ENCODE measurements at regions of chr1 and their contacts with region 1.

Region 1: DNA sequence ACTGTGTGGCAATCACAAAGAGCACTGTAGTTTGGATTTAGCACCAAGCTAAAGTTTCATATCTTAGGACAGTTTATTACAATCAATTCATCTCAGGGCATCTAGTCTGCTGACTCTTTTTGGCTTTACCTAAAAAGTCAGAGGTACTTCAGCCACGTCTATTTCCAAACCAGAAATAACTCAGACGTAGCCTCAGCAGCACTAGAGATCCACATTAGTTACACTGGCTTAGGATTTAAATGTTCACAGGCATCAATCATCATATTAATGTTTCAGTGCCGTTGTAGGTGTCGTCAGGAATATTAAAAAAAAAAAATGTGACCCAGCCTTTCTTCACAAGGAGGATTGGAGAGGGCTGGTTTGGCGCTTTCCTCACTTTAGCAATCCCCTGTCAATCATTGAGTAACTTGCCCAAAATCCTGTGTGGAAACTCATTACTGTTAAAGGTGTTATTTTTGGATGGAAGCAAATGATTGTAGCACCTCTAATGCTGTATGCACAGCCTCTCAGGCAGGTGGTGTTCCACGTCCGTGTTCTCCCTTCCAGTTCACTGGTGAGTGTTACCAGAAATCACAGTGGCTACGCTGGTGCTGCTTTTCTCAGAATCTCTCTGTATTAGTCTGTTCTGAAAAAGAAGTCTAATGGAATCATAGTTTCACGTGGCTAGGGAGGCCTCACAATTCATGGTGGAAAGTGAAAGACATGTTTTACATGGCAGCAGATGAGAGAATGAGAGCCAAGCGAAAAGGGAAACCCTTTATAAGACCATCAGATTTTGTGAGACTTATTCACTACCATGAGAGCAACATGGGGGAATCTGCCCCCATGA is 45.4 kb downstream of the NEK7 start:
- DNase-seq: peak; percentile 37
- ATAC-seq: peak; percentile 83
- H3K4me3 ChIP-seq: peak overlapping the region; percentile 4; the same call in 1 of the 2 replicates
- H3K27ac ChIP-seq: peak overlapping the region; percentile 56
- H3K4me1 ChIP-seq: peaks cover 12% of the 10 kb centered on the region
- H3K27me3 ChIP-seq: no peaks in the 10 kb centered on the region
- CTCF ChIP-seq: no peak
- EP300 ChIP-seq: no peak
- POLR2A ChIP-seq: no peak
- RAD21 ChIP-seq: peak; percentile 39; the same call in 1 of the 2 replicates

Region 2: DNA sequence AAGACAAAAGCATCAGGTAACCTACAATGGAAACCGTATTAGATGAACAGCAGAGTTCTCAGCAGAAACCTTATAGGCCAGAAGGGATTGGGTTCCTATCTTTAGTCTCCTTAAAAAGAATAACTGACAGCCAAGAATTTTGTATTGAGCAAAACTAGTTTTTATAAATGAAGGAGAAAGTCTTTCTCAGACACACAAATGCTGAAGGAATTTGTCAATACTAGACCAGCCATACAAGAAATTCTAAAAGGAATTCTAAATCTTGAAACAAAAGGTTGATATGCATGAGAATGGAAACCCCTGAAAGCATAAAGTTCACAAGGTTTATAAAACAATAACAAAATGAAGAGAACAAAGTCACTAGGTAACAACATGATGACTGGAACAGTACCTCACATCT is 12.8 kb after region 1 on chr1:
- CTCF ChIA-PET with region 1: no interaction called
- POLR2A ChIA-PET with region 1: no interaction called
- RAD21 ChIA-PET with region 1: no interaction called
- SMC1A ChIA-PET with region 1: interaction called, 4 read pairs
- in situ Hi-C with region 1: no loop called
- intact Hi-C with region 1: loop called (anchors 1 kb)
- DNase-seq: no peak
- ATAC-seq: no peak
- H3K4me3 ChIP-seq: no peak overlapping the region
- H3K27ac ChIP-seq: no peak overlapping the region
- H3K4me1 ChIP-seq: no peaks in the 10 kb centered on the region
- H3K27me3 ChIP-seq: no peaks in the 10 kb centered on the region
- CTCF ChIP-seq: no peak
- EP300 ChIP-seq: no peak
- POLR2A ChIP-seq: no peak
- RAD21 ChIP-seq: no peak

Measured in GM12878 (cell line).